Tibial artery (tissue), 4 donors: ENCODE measurements at regions of chr1 and their contacts with region 1.

Region 1: DNA sequence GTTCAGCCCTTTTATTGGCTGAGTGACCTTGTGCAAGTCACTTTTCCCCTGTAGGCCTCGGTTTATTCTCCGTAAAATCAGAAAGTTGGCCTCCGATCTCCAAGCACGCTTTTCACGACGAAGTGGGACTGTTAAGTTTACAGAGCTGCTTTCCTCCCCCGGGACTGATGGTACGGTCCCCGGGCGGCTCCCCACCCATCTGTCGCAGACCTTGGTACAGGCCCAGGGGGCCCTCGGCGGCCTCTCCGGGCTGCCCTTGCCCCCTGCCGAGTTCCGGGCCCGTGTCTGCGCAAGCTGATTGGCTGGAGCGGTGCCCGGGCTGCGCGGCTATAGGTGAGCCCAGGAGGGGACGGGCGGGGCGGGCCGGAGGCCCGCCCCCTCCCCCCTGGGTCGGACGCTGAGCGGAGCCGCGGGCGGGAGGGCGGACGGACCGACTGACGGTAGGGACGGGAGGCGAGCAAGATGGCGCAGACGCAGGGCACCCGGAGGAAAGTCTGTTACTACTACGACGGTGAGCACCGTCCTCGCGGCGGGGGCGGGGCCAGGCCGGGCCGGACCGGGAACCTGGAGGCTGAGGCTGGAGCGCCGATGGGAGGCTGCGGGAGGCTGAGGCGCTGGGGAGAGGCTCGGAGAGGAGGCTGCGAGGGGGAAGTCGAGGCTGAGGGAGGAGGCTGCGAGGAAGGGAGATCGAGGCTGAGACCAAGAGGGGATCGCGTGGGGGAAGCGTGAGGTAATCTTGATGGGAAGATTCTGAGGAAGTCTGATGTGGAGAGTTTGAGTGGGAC is at the start of gene HDAC1:
- DNase-seq: peak; percentile 93 to 97
- H3K4me3 ChIP-seq: peak within 1 kb of the TSS; percentile 81 to 90
- H3K27ac ChIP-seq: peak within 1 kb of the TSS; percentile 89 to 90
- H3K4me1 ChIP-seq: peaks cover 0 to 15% (median 6%) of the 10 kb centered on the region in 4 donors
- H3K27me3 ChIP-seq: no peaks in the 10 kb centered on the region
- CTCF ChIP-seq: no peak

Region 2: DNA sequence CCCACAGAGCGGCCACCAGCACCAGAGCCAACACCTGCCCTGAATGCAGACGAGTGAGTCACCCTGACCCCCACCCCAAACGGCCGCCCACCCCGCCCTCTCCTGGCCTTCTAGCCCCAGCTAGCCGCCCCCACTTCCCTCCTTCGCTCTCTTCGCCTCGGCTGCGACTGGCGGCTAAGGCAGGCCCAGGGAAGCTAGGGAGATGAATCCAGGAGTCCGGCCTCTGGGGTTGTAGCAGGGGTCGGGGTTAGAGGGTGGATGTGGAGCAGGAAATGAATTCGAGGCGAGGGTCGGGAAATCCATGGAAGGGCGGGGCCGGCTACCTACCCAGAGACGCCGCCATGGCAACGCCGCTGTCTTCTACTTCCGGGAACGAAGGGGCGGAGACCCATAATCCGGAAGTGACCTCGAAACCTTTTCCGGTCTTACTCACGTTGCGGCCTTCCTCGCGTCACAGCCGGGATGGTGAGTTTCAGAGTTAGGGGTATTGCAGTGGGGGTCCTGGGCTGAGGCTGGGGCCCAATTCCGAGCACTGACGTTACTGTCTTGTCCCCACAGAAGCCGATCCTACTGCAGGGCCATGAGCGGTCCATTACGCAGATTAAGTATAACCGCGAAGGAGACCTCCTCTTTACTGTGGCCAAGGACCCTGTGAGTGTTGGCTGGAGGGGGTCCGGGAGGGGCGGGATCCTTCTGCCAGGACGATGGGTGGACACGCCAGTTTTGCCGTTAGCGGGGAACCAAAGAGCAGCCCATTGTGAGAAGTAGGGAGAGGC is 69.7 kb before region 1 on chr1 and contains the starts of genes EIF3I and TMEM234:
- intact Hi-C with region 1: loop called (anchors 5 kb)
- DNase-seq: peak; percentile 94 to 95
- H3K4me3 ChIP-seq: peak within 1 kb of the TSS; percentile 65 to 86
- H3K27ac ChIP-seq: peak within 1 kb of the TSS; percentile 90 to 92
- H3K4me1 ChIP-seq: peaks cover 0 to 34% (median 28%) of the 10 kb centered on the region in 4 donors
- H3K27me3 ChIP-seq: no peaks in the 10 kb centered on the region
- CTCF ChIP-seq: no peak

Region 3: GRCh38 chr1:32335790-32336590 is 44.1 kb after region 1 on chr1 and contains the start of gene MARCKSL1:
- intact Hi-C with region 1: no loop called
- DNase-seq: peak; percentile 68 to 80
- H3K4me3 ChIP-seq: peak within 1 kb of the TSS; percentile 55 to 78
- H3K27ac ChIP-seq: peak within 1 kb of the TSS in 1 of 2 donors; percentile 11
- H3K4me1 ChIP-seq: peaks cover 0 to 37% (median 21%) of the 10 kb centered on the region in 4 donors
- H3K27me3 ChIP-seq: peaks cover 0 to 12% of the 10 kb centered on the region in 2 donors
- CTCF ChIP-seq: no peak

Region 4: DNA sequence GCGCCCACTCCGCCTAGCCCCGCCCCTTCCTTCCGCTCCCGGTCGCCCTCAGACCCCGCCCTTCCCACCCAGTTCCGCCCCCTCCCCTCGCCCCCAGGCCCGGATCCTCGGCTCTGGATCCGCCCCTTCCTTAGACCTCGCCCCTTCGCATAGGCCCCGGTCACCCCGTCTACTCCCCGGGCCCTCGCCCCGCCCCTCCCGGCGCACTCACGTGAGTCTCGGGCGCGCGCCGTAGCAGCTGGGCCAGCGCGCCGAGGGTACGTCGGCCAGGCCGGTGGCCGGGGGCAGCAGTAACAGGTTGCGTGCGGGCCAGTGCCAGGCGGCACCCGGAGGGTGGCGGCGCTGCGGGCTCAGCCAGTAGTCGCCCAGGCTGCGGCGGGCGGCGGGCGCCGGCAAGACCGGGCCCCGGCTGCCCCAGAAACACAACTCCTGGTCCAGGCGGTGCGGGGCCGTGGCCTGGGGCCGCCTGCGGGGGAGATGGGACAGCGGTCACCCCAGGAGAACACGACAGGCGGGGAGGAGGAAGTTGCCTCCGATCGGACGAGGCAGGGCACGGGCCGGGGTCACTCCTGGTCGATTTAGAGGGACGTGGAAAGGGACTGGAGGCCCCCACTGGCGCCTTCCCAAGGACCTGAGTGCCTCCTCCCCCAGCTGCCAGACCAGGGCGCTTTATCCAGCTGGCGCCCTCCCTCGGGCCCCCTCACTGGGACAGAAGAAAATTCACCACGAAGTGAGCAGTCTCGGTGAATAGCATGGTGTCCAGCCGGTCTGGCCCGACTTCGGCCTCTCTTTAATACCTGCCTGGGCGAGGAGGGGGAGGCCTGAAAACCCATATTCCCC is 59.7 kb after region 1 on chr1:
- intact Hi-C with region 1: no loop called
- DNase-seq: peak; percentile 94 to 96
- H3K4me3 ChIP-seq: peak overlapping the region; percentile 59 to 84
- H3K27ac ChIP-seq: peak overlapping the region; percentile 86 to 94
- H3K4me1 ChIP-seq: peaks cover 0 to 21% (median 20%) of the 10 kb centered on the region in 4 donors
- H3K27me3 ChIP-seq: no peaks in the 10 kb centered on the region
- CTCF ChIP-seq: no peak